ENCODE measurements at regions of chrX and their contacts with region 1.

Region 1: GRCh38 chrX:145825896-145826295 is 8.3 kb downstream of the SLITRK2 start:
- DNase-seq: no peak
- H3K4me3 ChIP-seq: no peak overlapping the region
- H3K27ac ChIP-seq: no peak overlapping the region
- H3K4me1 ChIP-seq: no peaks in the 10 kb centered on the region
- H3K27me3 ChIP-seq: no peaks in the 10 kb centered on the region
- CTCF ChIP-seq: no peak
- POLR2A ChIP-seq: no peak

Region 2: GRCh38 chrX:145609951-145610511 is 215.9 kb before region 1 on chrX:
- intact Hi-C with region 1: no loop called
- DNase-seq: no peak
- H3K4me3 ChIP-seq: no peak overlapping the region
- H3K27ac ChIP-seq: no peak overlapping the region
- H3K4me1 ChIP-seq: no peaks in the 10 kb centered on the region
- H3K27me3 ChIP-seq: no peaks in the 10 kb centered on the region
- CTCF ChIP-seq: no peak
- POLR2A ChIP-seq: no peak

Region 3: DNA sequence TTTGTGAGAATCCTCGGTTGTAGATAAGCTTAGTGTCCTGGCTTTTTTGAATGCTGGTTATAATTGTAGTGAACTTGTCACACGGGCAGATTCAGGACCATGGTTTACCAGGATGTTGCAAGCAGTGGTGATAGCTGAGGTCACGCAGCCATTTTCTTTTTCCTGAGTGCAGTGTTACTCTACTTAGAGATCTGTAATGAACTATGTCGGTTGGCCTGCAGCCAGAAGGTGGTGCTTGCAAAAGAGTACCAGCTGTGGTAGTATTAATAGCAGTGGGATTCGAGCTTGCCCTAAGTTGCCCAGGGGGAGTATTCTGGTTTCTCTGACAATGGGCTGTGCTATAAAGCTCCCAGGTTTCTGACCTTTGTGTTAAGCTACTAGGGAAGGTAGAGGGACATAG is 360.6 kb after region 1 on chrX:
- intact Hi-C with region 1: loop called (anchors 10 kb)
- DNase-seq: no peak
- H3K4me3 ChIP-seq: no peak overlapping the region
- H3K27ac ChIP-seq: no peak overlapping the region
- H3K4me1 ChIP-seq: no peaks in the 10 kb centered on the region
- H3K27me3 ChIP-seq: no peaks in the 10 kb centered on the region
- CTCF ChIP-seq: no peak
- POLR2A ChIP-seq: no peak